Naive thymus-derived CD4-positive, alpha-beta T cell (primary cell): ENCODE measurements at regions of chr5 and their contacts with region 1.

Region 1: DNA sequence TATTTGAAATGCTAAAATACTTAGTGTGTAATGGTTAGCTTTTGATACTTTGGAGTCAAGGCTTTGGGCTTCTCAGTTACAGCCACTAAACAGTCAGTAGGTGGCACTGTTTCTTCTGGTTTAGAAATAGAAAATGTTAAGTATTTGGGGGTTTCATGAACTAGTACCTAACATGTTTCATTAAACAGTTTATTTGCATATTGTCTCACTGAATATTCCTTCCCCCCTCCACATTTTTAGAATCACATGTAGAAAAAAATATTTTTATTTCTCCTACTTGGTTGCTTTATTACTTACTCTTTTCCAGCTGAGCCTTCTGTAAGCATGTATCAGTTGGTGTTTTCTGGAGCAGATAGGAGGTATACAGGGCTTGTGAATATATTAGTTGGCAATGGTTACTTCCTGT is 48.0 kb downstream of the IPO11 start:
- DNase-seq: peak in 6 of 9 donors; percentile 11 to 48 (median 34)
- ATAC-seq: peak; percentile 58
- H3K4me3 ChIP-seq: no peak overlapping the region
- H3K4me3 Mint-ChIP-seq: no peak overlapping the region
- H3K27ac ChIP-seq: no peak overlapping the region
- H3K27ac Mint-ChIP-seq: peak overlapping the region in 1 of 9 donors; percentile 19
- H3K4me1 ChIP-seq: no peaks in the 10 kb centered on the region
- H3K4me1 Mint-ChIP-seq: peaks cover 1 to 17% (median 4%) of the 10 kb centered on the region in 7 donors
- H3K27me3 ChIP-seq: no peaks in the 10 kb centered on the region
- H3K27me3 Mint-ChIP-seq: no peaks in the 10 kb centered on the region

Region 2: GRCh38 chr5:62155988-62156387 is 304.6 kb before region 1 on chr5:
- CTCF ChIA-PET with region 1: no interaction called
- POLR2A ChIA-PET with region 1: no interaction called
- intact Hi-C with region 1: no loop called
- DNase-seq: no peak
- ATAC-seq: no peak
- H3K4me3 ChIP-seq: no peak overlapping the region
- H3K4me3 Mint-ChIP-seq: no peak overlapping the region
- H3K27ac ChIP-seq: no peak overlapping the region
- H3K27ac Mint-ChIP-seq: no peak overlapping the region
- H3K4me1 ChIP-seq: no peaks in the 10 kb centered on the region
- H3K4me1 Mint-ChIP-seq: no peaks in the 10 kb centered on the region
- H3K27me3 ChIP-seq: no peaks in the 10 kb centered on the region
- H3K27me3 Mint-ChIP-seq: peaks cover 0 to 36% (median 22%) of the 10 kb centered on the region in 5 donors

Region 3: GRCh38 chr5:62494772-62495171 is 34.2 kb after region 1 on chr5:
- CTCF ChIA-PET with region 1: no interaction called
- POLR2A ChIA-PET with region 1: no interaction called
- intact Hi-C with region 1: no loop called
- DNase-seq: no peak
- ATAC-seq: no peak
- H3K4me3 ChIP-seq: no peak overlapping the region
- H3K4me3 Mint-ChIP-seq: no peak overlapping the region
- H3K27ac ChIP-seq: no peak overlapping the region
- H3K27ac Mint-ChIP-seq: no peak overlapping the region
- H3K4me1 ChIP-seq: no peaks in the 10 kb centered on the region
- H3K4me1 Mint-ChIP-seq: no peaks in the 10 kb centered on the region
- H3K27me3 ChIP-seq: no peaks in the 10 kb centered on the region
- H3K27me3 Mint-ChIP-seq: no peaks in the 10 kb centered on the region

Region 4: DNA sequence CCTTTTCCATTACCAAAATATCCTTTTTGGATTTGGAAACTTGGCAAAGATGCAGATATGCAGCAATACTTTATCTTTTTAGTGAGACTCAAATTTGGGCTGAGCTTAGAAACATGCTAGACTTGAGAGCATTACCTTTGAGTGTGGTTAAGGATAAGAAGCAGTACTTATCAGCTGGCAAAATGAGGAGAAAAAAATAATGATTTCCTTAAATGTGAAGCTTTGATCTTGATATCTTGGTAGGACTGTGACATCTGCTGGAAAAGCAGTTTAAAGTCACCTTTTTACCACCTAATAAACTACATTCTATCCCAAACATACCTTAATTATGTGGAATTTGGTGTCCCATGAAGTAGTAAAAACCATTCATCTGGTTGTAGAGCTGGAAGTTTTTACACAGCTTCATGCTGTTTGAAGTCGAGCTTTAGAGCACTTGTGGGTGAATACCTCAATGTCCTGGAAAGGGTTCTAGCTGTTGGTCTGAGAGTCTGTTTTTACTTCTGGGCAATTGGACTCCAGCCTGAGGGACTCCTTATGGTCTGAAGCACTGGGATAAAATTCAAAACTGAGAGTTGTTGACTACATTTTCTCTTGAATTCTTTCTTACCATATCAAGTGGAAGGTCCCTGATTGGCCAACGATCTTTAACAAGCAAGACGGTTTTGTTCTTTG is 171.5 kb after region 1 on chr5:
- CTCF ChIA-PET with region 1: no interaction called
- POLR2A ChIA-PET with region 1: no interaction called
- intact Hi-C with region 1: loop called (anchors 1 kb)
- DNase-seq: peak in 3 of 9 donors; percentile 2 to 8 (median 4)
- ATAC-seq: no peak
- H3K4me3 ChIP-seq: no peak overlapping the region
- H3K4me3 Mint-ChIP-seq: no peak overlapping the region
- H3K27ac ChIP-seq: no peak overlapping the region
- H3K27ac Mint-ChIP-seq: peak overlapping the region in 2 of 9 donors; percentile 30 to 48
- H3K4me1 ChIP-seq: no peaks in the 10 kb centered on the region
- H3K4me1 Mint-ChIP-seq: no peaks in the 10 kb centered on the region
- H3K27me3 ChIP-seq: no peaks in the 10 kb centered on the region
- H3K27me3 Mint-ChIP-seq: no peaks in the 10 kb centered on the region

Region 5: DNA sequence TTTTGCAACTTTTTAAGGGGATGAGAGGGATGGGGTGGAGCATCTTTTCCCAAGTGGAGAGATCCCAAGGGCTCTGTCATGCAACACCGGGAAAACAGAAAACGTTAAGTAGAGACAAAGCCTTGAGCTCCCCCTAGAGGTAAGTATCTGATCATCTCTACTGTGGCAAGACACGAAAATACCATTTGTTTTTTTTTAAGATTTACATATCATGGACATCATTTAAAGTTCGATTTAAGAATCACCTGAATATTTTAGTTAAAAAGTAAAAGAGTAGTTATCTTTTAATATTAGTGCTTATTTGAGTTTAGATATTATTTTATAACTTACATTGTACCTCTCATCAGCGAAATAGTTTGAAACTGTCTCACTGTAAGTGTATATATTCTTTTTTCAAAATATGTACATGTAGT is 318.4 kb after region 1 on chr5:
- CTCF ChIA-PET with region 1: no interaction called
- POLR2A ChIA-PET with region 1: no interaction called
- intact Hi-C with region 1: loop called (anchors 1 kb)
- DNase-seq: peak in 6 of 9 donors; percentile 2 to 36 (median 26)
- ATAC-seq: peak; percentile 61
- H3K4me3 ChIP-seq: no peak overlapping the region
- H3K4me3 Mint-ChIP-seq: peak overlapping the region in 3 of 10 donors; percentile 19 to 59 (median 40)
- H3K27ac ChIP-seq: no peak overlapping the region
- H3K27ac Mint-ChIP-seq: no peak overlapping the region
- H3K4me1 ChIP-seq: no peaks in the 10 kb centered on the region
- H3K4me1 Mint-ChIP-seq: peaks cover 0 to 16% (median 0%) of the 10 kb centered on the region in 7 donors
- H3K27me3 ChIP-seq: no peaks in the 10 kb centered on the region
- H3K27me3 Mint-ChIP-seq: peaks cover 0 to 7% (median 0%) of the 10 kb centered on the region in 5 donors

Region 6: DNA sequence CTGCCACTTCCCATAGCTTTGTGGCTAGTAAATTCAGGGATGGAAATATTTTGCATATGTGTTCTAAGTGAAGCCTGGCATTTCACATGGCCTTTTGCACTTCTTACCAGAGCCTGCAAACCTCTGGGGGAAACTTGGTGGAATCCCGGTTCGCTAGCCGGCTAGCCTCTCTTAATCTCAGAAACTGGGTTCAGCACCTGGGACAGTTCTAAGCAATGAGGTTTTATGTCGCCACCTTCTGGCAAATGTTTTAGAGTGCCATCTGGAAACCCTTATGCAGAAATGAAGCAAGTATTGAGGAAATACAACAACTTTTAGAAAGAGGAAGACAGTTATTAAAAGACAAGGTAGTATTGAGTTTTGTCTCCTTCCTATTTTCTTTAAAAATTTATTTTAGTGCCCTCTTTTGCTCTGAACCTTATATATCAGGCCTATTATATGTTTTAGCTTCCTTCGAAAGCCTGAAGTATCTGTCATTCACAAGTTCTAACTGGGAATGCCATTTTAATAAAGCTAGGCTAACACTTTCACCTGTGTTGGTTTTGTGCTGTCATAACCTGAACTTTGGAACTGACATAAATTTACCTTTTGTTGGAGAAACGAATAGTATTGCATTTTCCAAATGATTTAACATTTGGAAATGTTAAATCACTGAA is 1502.6 kb after region 1 on chr5:
- CTCF ChIA-PET with region 1: no interaction called
- POLR2A ChIA-PET with region 1: no interaction called
- intact Hi-C with region 1: loop called in 1 of 2 experiments (anchors 2 kb)
- DNase-seq: peak in 2 of 9 donors; percentile 1 to 23
- ATAC-seq: no peak
- H3K4me3 ChIP-seq: no peak overlapping the region
- H3K4me3 Mint-ChIP-seq: no peak overlapping the region
- H3K27ac ChIP-seq: no peak overlapping the region
- H3K27ac Mint-ChIP-seq: no peak overlapping the region
- H3K4me1 ChIP-seq: no peaks in the 10 kb centered on the region
- H3K4me1 Mint-ChIP-seq: peaks cover 0 to 2% (median 0%) of the 10 kb centered on the region in 7 donors
- H3K27me3 ChIP-seq: peaks cover 0 to 3% of the 10 kb centered on the region in 2 donors
- H3K27me3 Mint-ChIP-seq: peaks cover 31 to 46% (median 39%) of the 10 kb centered on the region in 5 donors